ENCODE measurements at regions of chr3 and their contacts with region 1.

Region 1: DNA sequence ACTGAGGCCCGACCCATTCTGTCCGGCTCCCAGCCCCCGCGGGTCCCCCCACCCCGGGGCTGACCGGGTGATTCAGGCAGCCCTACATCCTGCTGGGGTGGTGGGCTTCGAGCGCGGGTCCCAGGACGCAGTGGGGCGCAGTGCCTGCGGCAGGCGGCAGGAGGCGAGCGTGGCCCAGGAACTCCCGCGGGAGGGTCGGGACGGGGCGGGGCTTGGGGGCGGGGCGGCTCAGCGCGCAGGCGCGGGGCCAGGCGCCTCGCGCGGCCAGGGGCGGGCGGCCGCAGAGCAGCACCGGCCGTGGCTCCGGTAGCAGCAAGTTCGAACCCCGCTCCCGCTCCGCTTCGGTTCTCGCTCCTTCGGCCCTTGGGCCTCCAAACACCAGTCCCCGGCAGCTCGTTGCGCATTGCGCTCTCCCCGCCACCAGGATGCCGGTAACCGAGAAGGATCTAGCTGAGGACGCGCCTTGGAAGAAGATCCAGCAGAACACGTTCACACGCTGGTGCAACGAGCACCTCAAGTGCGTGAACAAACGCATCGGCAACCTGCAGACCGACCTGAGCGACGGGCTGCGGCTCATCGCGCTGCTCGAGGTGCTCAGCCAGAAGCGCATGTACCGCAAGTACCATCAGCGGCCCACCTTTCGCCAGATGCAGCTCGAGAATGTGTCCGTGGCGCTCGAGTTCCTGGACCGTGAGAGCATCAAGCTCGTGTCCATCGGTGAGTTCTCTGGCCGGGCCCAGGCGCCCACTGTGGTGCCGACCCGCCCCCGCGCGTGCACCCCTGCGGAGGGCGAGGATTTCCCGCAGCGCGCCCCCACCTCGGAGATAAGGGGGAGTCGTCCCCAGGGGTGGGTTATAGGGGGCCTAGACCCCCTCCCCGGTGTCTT is at the start of gene FLNB:
- DNase-seq: peak; percentile 69 to 89 (median 80)
- ATAC-seq: peak; percentile 72 to 73
- H3K4me3 Mint-ChIP-seq: peak within 1 kb of the TSS; percentile 84 to 96 (median 90)
- H3K27ac Mint-ChIP-seq: peak within 1 kb of the TSS; percentile 34 to 94 (median 89)
- H3K4me1 Mint-ChIP-seq: peaks cover 19 to 44% (median 38%) of the 10 kb centered on the region in 4 donors
- H3K27me3 Mint-ChIP-seq: no peaks in the 10 kb centered on the region
- polyA plus RNA-seq, gene FLNB: 11.8 to 32.2 (median 24.4) TPM

Region 2: GRCh38 chr3:57974796-57975388 is 33.5 kb before region 1 on chr3:
- POLR2A ChIA-PET with region 1: no interaction called
- DNase-seq: no peak
- ATAC-seq: no peak
- H3K4me3 Mint-ChIP-seq: no peak overlapping the region
- H3K27ac Mint-ChIP-seq: peak overlapping the region in 3 of 10 donors; percentile 28 to 29 (median 29)
- H3K4me1 Mint-ChIP-seq: peaks cover 2 to 14% (median 10%) of the 10 kb centered on the region in 4 donors
- H3K27me3 Mint-ChIP-seq: peaks cover 0 to 1% (median 0%) of the 10 kb centered on the region in 5 donors

Region 3: DNA sequence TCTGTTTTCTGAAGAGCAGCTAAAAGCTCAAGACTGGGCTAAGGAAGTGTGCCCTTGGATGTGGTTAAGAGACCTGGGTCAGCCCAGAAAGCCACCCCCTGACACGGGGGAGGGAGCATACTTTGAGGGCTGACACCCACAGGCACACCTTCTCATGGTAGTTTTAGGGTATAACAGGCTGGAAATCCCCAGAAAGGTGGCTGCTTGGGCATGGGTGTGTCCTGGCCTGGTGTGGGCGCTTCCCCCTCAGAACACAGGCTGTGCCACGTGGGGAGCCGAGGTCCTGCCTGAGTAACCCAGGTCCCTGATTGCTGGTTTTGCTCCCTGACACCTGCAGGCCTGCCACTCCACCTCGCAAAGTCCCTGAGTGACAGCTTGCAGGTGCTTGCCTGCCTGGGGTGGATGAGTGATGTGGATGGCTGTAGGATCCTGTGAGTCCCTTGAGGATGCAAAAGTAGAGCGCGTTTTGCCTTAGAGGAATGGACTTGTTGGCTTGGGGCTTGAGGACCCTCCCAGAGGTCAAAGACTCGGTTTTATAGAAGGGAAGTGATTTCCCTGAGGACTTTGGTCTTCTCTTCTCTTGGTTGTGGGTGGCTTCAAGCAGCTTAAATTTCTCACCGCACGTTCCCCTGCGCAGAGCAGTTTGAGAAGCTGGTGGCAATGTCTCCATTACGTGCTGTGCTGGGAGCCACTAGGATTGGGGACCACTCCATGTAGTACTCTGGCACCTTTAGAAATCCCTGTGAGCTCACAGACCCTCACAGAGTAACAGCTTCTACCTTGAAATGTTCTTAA is 108.0 kb after region 1 on chr3:
- POLR2A ChIA-PET with region 1: interaction called, 13 read pairs
- DNase-seq: peak; percentile 40 to 91 (median 78)
- ATAC-seq: peak; percentile 92 to 95
- H3K4me3 Mint-ChIP-seq: peak overlapping the region; percentile 16 to 83 (median 64)
- H3K27ac Mint-ChIP-seq: peak overlapping the region; percentile 86 to 97 (median 92)
- H3K4me1 Mint-ChIP-seq: peaks cover 27 to 61% (median 56%) of the 10 kb centered on the region in 4 donors
- H3K27me3 Mint-ChIP-seq: no peaks in the 10 kb centered on the region